ENCODE measurements at regions of chr17 and their contacts with region 1.

Region 1: DNA sequence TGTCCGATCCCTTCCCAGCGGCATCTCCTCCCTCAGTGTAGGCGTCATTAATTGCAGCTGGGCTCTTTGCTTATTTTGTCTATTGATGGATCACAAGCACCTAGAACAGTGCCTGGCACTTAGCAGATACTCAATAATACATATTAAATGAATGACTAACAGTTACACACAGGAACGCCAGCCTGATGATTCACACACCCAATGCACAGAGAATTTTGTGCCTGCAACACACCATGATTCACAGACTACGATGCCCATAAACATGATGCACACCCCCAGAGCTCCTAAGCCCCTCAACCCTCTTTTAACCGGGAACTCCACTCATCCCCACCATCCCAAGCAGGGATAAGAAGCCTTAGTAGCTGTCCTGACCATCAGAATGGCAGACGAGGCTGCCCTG is 66.6 kb upstream of the TMEM97 start:
- DNase-seq: no peak
- ATAC-seq: no peak

Region 2: DNA sequence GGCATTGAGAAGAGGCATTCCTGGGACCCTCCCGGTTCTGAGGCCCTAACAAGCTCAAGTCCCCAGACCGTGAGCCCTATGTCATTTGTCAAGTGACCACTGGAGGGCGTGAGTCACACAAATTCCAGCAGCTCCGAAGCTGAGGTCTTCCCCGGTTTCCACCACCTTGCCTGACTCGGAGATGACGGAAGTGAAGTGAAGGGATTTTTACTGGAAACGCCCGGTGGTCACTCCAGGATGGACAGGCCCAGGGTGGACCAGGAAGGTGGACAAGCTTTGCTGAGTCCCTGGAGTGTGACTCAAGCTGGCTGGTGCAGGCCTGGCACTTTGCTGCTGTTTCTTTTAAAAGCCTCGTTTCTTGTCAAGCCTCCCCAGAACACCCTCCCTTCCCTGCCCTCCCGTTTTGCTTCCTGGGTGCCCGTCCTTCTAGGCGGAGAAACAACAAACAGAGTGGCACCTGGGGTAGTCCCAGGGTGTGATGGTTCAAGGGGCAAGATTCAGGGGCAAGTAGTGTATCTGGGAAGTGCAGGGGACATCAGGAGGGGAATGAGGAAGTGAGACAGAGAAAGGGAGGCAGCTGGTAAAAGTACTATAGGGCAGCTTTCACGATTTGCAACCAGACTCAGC is 446.8 kb before region 1 on chr17:
- intact Hi-C with region 1: loop called (anchors 5 to 10 kb)
- DNase-seq: peak; percentile 83
- ATAC-seq: peak; percentile 92 to 95

Region 3: GRCh38 chr17:27892866-27893769 is 359.3 kb before region 1 on chr17 and contains the start of gene LYRM9:
- intact Hi-C with region 1: loop called in 1 of 2 experiments (anchors 10 kb)
- DNase-seq: peak; percentile 94
- ATAC-seq: peak; percentile 100
- total RNA-seq, gene LYRM9: 5.7 to 8.7 TPM

Region 4: DNA sequence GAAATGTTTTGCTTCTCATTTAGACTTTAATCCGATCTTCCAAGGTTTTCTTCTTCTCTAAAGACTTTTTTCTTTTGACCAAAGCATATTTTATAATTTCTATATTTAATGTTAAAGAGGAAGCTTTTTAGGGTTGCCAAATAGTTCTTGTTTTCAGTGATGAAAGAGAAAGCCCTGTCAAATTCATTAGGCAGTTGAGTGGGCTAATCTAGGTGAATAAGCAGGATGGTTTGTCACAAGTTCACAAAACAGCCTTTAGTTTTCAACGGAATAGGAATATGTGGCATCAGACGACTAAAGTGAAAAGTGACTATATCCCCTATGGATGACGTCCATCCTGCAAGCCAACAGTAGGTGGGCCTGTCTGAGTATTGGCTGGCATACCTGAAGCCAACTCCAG is 91.1 kb before region 1 on chr17:
- intact Hi-C with region 1: no loop called
- DNase-seq: no peak
- ATAC-seq: no peak

Region 5: DNA sequence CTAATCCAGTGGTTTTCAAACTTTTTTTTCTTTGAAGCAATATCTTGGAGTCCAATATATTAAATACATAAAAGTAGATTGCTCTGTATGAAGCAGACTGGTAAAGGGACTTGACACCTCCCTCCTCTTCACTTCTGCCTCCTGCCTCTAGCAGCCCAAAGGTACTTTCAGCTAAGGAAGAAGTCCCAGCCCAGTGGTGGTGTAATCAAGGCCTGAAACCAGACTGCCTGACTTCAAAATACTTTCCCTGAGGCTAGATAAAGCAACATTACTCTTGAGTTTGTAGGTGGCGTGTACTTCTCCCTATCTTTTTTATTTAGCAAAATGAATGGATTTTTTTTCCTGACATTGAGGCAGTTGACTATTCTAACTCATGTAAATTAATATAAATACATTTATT is 55.8 kb before region 1 on chr17:
- intact Hi-C with region 1: no loop called
- DNase-seq: no peak
- ATAC-seq: no peak

Region 6: DNA sequence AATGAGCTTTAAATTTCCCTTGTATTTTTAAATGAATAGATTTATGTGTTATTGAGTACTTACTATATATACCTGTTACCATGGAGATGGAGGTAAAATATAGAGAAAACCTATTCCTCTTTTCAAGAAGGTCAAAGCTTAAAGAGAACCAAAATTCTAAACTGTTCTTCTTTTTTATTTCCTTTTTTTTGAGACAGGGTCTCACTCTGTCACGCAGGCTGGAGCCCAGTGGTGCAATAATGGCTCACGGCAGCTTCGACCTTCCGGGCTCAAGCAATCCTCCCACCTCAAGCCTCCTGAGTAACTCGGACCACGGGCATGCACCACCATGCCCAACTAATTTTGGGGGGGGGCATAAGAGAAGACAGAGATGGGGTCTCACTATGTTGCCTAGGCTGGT is 41.6 kb after region 1 on chr17:
- intact Hi-C with region 1: no loop called
- DNase-seq: no peak
- ATAC-seq: no peak

Region 7: DNA sequence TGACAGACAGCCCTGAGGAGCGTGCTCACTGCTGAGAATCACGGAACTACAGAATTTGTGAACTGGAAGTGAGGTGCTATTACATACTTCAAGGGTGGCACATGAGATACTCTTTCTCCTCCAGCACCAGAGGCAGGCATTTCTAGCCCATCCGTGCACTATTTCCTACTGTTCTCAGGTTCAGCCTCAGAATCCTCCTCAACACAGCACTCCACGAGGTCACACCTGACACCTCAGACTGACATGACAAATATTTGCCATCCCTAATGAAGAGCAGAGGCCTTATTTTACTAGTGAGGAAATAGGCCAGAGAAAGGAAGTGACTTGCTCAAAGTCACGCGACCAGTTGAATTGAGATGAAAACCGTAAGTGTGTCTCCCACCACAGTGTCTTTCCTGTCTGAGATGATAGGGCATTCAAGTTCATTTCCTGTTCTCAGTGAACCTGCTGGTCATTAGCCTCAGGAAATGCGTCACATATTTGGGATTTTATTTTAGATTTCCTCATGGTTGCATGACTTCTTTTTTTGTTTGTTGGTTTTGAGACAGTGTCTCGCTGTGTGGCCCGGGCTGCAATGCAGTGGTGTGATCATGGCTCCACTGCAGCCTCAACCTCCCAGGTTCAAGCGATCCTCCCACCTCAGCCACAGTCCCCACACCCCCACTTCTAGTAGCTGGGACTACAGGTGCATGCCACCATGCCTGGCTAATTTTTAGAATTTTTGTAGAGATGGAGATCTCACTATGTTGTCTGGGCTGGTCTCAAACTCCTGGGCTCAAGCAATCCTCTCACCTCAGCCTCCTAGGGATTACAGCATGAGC is 729.9 kb after region 1 on chr17:
- intact Hi-C with region 1: no loop called
- DNase-seq: no peak
- ATAC-seq: peak; percentile 63 to 76

Measured in left cardiac atrium (tissue), 4 donors.